ENCODE measurements at regions of chr1 and their contacts with region 1.

Region 1: DNA sequence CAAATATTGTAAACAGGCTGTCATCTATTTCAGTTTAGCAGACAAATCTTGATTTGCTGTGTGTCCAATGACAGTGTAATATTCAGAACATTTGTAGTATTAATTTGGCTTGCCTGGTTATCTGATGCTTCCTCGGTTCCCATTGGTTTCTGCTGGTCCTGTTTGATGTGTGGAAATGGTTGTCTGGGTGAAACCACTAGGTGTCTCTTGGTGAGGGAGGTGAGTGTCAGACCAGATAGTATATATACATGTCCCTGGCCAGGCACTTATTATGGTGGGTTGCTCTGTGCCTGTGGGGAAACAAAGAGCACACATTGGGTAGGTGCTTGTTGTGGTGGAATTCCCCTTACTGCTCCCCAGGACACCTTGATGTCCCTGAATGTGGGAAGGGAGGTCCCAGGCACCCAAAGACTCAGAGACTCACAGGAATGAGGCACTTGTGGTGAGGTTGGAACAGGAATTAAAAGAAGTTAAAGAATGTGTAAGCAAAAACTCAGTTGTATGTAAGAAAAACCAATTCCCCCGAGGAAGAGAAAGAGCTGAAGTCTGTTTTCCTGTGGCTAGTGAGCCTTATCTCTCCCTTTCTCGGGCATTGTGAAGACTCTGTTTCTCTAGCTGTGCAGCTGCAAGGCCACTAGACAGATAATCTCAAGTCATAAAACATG is 1519.1 kb downstream of the BRINP3 start:
- DNase-seq: no peak
- ATAC-seq: no peak
- H3K4me3 ChIP-seq: no peak overlapping the region
- H3K27ac ChIP-seq: no peak overlapping the region
- H3K4me1 ChIP-seq: no peaks in the 10 kb centered on the region
- H3K27me3 ChIP-seq: no peaks in the 10 kb centered on the region
- CTCF ChIP-seq: no peak

Region 2: DNA sequence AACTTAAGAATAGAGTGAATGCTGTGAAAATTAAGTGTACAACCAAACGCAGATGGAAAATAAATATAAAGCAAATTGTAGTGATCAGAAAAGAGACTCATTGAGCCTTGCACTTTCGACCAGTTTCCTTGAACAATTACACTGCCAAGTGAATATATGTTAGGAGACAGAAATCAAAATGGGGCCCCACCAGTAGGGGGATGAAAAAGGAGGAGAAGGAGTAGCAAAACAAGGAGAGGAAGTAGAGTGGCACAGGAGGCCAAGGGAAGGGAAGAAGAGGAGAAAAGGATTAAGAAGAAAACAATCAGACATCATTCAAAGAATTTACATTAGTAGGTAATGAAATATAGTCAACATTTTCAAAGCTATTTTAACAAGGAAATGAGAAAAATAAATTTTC is 359.3 kb before region 1 on chr1:
- intact Hi-C with region 1: no loop called
- DNase-seq: no peak
- ATAC-seq: no peak
- H3K4me3 ChIP-seq: no peak overlapping the region
- H3K27ac ChIP-seq: no peak overlapping the region
- H3K4me1 ChIP-seq: no peaks in the 10 kb centered on the region
- H3K27me3 ChIP-seq: no peaks in the 10 kb centered on the region
- CTCF ChIP-seq: no peak

Region 3: DNA sequence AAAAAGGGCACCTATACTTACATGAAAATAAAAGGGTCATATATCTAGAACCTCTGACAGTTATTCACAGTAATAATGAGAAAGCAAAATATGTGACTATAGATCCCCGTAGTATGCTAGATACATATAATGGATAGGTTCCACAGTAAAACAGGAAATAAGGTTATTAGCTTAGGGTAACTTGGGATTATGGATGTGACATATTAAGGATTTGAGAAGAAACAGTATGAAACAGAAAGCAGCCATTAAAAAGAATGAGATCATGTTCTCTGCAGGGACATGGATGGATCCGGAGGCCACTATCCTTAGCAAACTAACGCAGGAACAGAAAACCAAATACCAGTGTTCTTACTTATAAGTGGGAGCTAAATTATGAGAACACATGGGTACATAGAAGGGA is 28.2 kb before region 1 on chr1:
- intact Hi-C with region 1: loop called in 1 of 10 experiments (anchors 2 kb)
- DNase-seq: no peak
- ATAC-seq: no peak
- H3K4me3 ChIP-seq: no peak overlapping the region
- H3K27ac ChIP-seq: no peak overlapping the region
- H3K4me1 ChIP-seq: no peaks in the 10 kb centered on the region
- H3K27me3 ChIP-seq: no peaks in the 10 kb centered on the region
- CTCF ChIP-seq: no peak

Measured in heart right ventricle (tissue), 16 donors.